Calu3 (cell line): ENCODE measurements at regions of chr9 and their contacts with region 1.

Region 1: GRCh38 chr9:91164724-91165520 is 196.8 kb downstream of the AUH start:
- DNase-seq: peak; percentile 71
- H3K4me3 Mint-ChIP-seq: no peak overlapping the region
- H3K27ac Mint-ChIP-seq: no peak overlapping the region
- H3K4me1 Mint-ChIP-seq: peaks cover 17% of the 10 kb centered on the region
- H3K27me3 Mint-ChIP-seq: no peaks in the 10 kb centered on the region
- CTCF ChIP-seq: no peak

Region 2: GRCh38 chr9:91148306-91148705 is 16.6 kb before region 1 on chr9:
- CTCF ChIA-PET with region 1: no interaction called
- intact Hi-C with region 1: loop called (anchors 1 kb)
- DNase-seq: no peak
- H3K4me3 Mint-ChIP-seq: no peak overlapping the region
- H3K27ac Mint-ChIP-seq: no peak overlapping the region
- H3K4me1 Mint-ChIP-seq: no peaks in the 10 kb centered on the region
- H3K27me3 Mint-ChIP-seq: no peaks in the 10 kb centered on the region
- CTCF ChIP-seq: no peak

Region 3: DNA sequence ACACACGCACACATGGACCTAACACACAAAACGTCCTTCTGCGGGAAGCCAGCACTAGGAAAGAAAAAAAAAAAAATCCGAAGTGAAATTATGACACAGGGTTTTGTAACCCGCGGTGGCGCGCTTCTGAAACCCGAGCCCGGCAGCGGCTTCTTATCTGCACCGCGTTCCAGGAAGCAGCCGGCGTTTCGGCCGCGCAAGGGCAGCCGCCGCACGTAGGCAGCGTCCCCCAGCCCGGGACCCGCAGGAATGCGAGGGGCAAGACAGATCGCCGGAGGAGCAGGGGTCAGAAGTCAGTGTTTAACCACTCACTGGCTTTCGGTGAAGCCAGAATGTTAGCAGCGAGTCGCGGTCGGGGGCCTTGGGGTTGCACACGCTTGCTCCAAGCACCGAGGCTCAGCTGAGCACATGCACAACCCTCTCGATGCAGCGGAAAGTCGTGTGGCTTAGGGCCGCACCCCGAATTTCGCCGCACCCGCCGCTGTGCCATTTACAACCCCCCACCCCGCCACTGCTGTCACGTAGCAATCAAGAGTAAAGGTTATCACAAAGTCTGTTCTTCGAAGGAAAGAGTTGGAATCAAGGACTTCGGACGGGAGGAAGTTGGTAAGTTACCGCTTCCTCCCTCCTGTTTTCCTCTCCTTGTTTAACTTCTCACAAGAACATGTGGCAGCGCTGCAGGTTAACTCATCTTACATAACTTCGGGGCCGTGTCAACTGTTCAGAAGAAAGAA is 28.9 kb after region 1 on chr9:
- CTCF ChIA-PET with region 1: interaction called, 4 read pairs
- intact Hi-C with region 1: loop called (anchors 2 kb)
- DNase-seq: peak; percentile 80
- H3K4me3 Mint-ChIP-seq: peak overlapping the region; percentile 66
- H3K27ac Mint-ChIP-seq: peak overlapping the region; percentile 89
- H3K4me1 Mint-ChIP-seq: peaks cover 30% of the 10 kb centered on the region
- H3K27me3 Mint-ChIP-seq: no peaks in the 10 kb centered on the region
- CTCF ChIP-seq: no peak

Region 4: DNA sequence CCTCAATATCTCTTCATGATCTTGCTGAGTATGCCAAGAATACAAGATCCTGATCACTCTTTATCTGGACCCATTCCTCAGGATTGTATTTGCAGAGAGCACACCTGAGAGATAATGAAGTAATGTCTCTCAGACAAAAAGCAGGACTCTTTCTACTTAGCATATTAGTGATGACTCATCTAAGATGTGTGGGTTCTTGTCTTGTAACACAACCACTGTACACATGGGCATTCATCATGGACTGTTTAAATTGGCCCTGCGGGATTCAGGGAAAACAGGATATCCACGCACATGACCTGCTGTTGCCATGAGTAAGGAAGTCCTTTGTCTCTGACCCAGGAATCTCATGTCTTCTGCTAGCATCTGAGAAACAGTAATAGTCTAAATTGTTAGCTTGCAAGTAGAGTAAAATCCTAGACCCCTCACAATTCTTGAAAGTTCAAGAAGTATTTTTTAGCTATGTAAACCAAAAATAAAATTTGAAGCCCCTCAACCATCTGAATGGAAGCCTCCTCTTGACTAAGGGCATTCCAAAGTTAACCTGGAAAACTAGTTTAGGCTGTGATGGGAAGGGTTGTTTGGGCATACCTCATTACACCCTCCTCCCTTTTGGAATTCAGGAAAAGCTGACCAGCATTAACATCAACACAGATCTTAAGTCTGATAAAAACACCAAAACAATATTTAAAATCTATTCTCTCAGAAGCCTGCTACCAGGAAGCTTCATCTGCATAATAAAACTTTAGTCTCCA is 286.8 kb after region 1 on chr9:
- CTCF ChIA-PET with region 1: no interaction called
- intact Hi-C with region 1: no loop called
- DNase-seq: no peak
- H3K4me3 Mint-ChIP-seq: no peak overlapping the region
- H3K27ac Mint-ChIP-seq: no peak overlapping the region
- H3K4me1 Mint-ChIP-seq: no peaks in the 10 kb centered on the region
- H3K27me3 Mint-ChIP-seq: peaks cover 6% of the 10 kb centered on the region
- CTCF ChIP-seq: no peak